ENCODE measurements at regions of chr5 and their contacts with region 1.

Region 1: DNA sequence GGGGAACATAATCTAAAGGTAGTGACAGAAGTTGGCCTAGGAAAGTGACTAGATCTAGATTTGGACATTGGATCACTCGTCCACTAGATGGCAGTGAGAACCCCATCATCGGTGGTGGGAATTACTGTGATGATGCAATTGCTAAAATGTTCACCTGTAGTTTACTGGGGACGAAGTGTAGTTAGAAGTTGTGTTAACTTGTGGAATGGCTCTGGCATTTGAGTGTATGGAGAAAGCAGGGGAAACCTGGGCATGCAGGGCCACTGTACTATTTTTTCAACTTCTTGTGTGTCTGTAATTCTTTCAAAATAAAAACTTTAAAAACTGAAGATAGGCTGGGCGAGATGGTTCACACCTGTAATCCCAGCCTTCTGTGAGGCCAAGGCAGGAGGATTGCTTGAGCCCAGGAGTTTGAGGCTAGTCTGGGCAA is 75.5 kb downstream of the PHAX start:
- DNase-seq: peak; percentile 62 to 89
- ATAC-seq: peak; percentile 74 to 75
- H3K4me3 ChIP-seq: no peak overlapping the region
- H3K27ac ChIP-seq: peak overlapping the region in 1 of 2 experiments; percentile 55; a peak in 2 of 6 replicates
- H3K4me1 ChIP-seq: peaks cover 7% of the 10 kb centered on the region; the same call in 1 of the 3 replicates
- CTCF ChIP-seq: peak; percentile 92
- EP300 ChIP-seq: no peak
- POLR2A ChIP-seq: no peak
- RAD21 ChIP-seq: peak; percentile 88 to 90

Region 2: GRCh38 chr5:126656396-126657007 is 19.7 kb before region 1 on chr5:
- CTCF ChIA-PET with region 1: interaction called, 18 read pairs
- POLR2A ChIA-PET with region 1: no interaction called
- DNase-seq: peak; percentile 55 to 59
- ATAC-seq: peak in 1 of 2 experiments; percentile 64; a peak in 3 of 6 replicates
- H3K4me3 ChIP-seq: no peak overlapping the region
- H3K27ac ChIP-seq: no peak overlapping the region
- H3K4me1 ChIP-seq: peaks cover 9% of the 10 kb centered on the region; the same call in 2 of the 3 replicates
- CTCF ChIP-seq: peak; percentile 98
- EP300 ChIP-seq: no peak
- POLR2A ChIP-seq: no peak
- RAD21 ChIP-seq: peak; percentile 92

Region 3: GRCh38 chr5:126664586-126664985 is 11.6 kb before region 1 on chr5:
- CTCF ChIA-PET with region 1: interaction called, 18 read pairs
- POLR2A ChIA-PET with region 1: no interaction called
- DNase-seq: no peak
- ATAC-seq: no peak
- H3K4me3 ChIP-seq: no peak overlapping the region
- H3K27ac ChIP-seq: no peak overlapping the region
- H3K4me1 ChIP-seq: no peaks in the 10 kb centered on the region
- CTCF ChIP-seq: no peak
- EP300 ChIP-seq: no peak
- POLR2A ChIP-seq: no peak
- RAD21 ChIP-seq: no peak

Region 4: DNA sequence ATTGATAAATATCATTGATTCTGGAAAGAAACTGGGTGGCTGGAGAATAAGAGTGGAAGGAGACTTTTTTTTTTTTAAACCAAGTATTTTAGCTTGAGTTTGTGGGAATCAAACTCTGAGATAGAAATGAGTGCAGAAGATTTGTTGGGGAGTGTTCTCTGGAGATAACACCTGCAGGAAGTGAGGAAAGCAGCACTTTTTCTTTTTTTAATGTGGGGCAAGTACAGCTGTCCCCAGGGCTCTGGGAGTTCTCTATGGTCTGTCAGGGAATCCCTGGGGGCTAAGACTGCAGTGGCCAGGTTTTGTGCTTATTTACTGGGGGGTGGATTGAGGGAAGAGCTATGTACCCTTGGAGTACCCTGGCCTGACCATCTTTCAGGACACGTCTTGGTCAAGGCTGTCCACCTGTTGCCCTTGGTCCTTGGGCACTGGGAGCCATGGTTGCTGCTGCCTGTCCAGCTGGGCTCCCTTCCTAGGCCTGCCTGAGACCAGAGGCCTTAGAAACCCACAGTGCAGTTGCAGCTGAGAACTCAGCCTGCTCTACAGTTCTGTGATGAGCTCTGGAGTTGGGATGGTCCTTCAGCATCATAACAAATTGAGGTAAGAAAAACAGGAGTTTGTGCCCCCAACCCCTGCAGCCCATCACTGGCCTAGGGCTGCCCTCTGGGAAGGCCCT is 10.4 kb after region 1 on chr5:
- CTCF ChIA-PET with region 1: interaction called, 19 read pairs
- POLR2A ChIA-PET with region 1: no interaction called
- DNase-seq: no peak
- ATAC-seq: no peak
- H3K4me3 ChIP-seq: no peak overlapping the region
- H3K27ac ChIP-seq: no peak overlapping the region
- H3K4me1 ChIP-seq: no peaks in the 10 kb centered on the region
- CTCF ChIP-seq: no peak
- EP300 ChIP-seq: no peak
- POLR2A ChIP-seq: no peak
- RAD21 ChIP-seq: no peak

Region 5: GRCh38 chr5:126755593-126755992 is 79.4 kb after region 1 on chr5:
- CTCF ChIA-PET with region 1: interaction called, 13 read pairs
- POLR2A ChIA-PET with region 1: no interaction called
- DNase-seq: no peak
- ATAC-seq: no peak
- H3K4me3 ChIP-seq: no peak overlapping the region
- H3K27ac ChIP-seq: no peak overlapping the region
- H3K4me1 ChIP-seq: peaks cover 6% of the 10 kb centered on the region; the same call in 2 of the 3 replicates
- CTCF ChIP-seq: no peak
- EP300 ChIP-seq: no peak
- POLR2A ChIP-seq: no peak
- RAD21 ChIP-seq: no peak

Region 6: GRCh38 chr5:126794157-126794828 is 118.1 kb after region 1 on chr5:
- CTCF ChIA-PET with region 1: interaction called, 15 read pairs
- POLR2A ChIA-PET with region 1: no interaction called
- DNase-seq: no peak
- ATAC-seq: 0 out of 6 replicates have a peak, but pooled peaks of 1 of the 2 experiments have one; percentile 18
- H3K4me3 ChIP-seq: no peak overlapping the region
- H3K27ac ChIP-seq: peak overlapping the region in 1 of 2 experiments; percentile 25; a peak in 3 of 6 replicates
- H3K4me1 ChIP-seq: peaks cover 15% of the 10 kb centered on the region; the same call in 2 of the 3 replicates
- CTCF ChIP-seq: no peak
- EP300 ChIP-seq: no peak
- POLR2A ChIP-seq: no peak
- RAD21 ChIP-seq: no peak

Region 7: GRCh38 chr5:126801992-126802294 is 125.7 kb after region 1 on chr5:
- CTCF ChIA-PET with region 1: interaction called, 38 read pairs
- POLR2A ChIA-PET with region 1: no interaction called
- DNase-seq: peak in 1 of 2 experiments; percentile 41
- ATAC-seq: peak; percentile 68 to 79
- H3K4me3 ChIP-seq: no peak overlapping the region
- H3K27ac ChIP-seq: 0 out of 6 replicates have a peak overlapping the region, but pooled peaks of 1 of the 2 experiments have one; percentile 12
- H3K4me1 ChIP-seq: peaks cover 19% of the 10 kb centered on the region
- CTCF ChIP-seq: peak; percentile 68
- EP300 ChIP-seq: no peak
- POLR2A ChIP-seq: no peak
- RAD21 ChIP-seq: peak; percentile 37 to 67